ENCODE measurements at regions of chr1 and their contacts with region 1.

Region 1: GRCh38 chr1:145978854-145979759 is 14.6 kb downstream of the POLR3GL start:
- DNase-seq: no peak
- ATAC-seq: no peak
- H3K4me3 ChIP-seq: no peak overlapping the region
- H3K27ac ChIP-seq: no peak overlapping the region
- H3K4me1 ChIP-seq: 0 out of 2 replicates have a peak, but pooled peaks cover 4% of the 10 kb centered on the region
- H3K27me3 ChIP-seq: no peaks in the 10 kb centered on the region
- CTCF ChIP-seq: peak; percentile 26

Region 2: DNA sequence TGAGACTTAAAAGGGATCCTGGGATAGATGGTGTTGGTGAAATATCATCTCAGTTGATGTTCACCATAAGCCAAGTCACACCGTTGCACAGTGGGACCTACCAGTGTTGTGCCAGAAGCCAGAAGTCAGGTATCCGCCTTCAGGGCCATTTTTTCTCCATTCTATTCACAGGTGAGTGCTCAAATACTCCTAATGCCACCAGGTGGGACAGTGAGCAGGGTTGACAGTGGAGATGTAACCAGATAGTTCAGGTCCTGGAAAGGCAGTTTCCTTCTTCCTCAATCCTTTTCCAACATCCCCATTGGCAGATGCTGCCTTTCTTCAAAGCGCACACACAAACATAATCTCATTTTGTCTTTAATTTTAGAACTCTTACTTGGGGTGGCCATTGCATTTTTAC is 248.2 kb before region 1 on chr1:
- CTCF ChIA-PET with region 1: no interaction called
- POLR2A ChIA-PET with region 1: no interaction called
- in situ Hi-C with region 1: no loop called
- intact Hi-C with region 1: no loop called
- DNase-seq: no peak
- ATAC-seq: no peak
- H3K4me3 ChIP-seq: no peak overlapping the region
- H3K27ac ChIP-seq: no peak overlapping the region
- H3K4me1 ChIP-seq: no peaks in the 10 kb centered on the region
- H3K27me3 ChIP-seq: no peaks in the 10 kb centered on the region
- CTCF ChIP-seq: peak; percentile 19

Region 3: DNA sequence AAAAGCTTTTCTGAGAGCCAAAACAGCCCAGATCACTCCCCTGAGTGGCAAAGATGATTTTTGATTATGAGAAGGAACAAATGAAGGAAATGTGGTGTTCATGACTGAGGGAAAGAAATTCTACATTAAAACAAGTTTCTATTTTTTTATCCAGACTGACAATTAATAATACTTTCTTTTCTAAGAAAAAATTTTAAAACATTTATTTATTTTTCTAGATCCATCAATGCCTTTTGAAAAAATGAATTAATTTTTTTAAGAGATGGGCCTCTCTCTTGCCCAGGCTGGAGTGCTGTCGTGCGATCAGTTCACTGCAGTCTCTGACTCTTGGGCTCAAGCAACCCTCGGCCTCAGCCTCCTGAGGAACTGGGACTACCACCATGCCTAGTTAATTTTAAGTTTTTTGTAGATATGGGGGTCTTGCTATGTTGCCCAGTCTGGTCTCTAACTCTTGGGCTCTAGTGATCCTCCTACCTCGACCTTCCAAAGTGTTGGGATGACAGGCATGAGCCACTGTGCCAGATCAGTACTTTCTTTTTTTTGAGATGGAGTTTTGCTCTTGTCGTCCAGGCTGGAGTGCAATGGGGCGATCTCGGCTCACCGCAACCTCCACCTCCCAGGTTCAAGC is 28.5 kb after region 1 on chr1:
- CTCF ChIA-PET with region 1: interaction called, 12 read pairs
- POLR2A ChIA-PET with region 1: no interaction called
- in situ Hi-C with region 1: no loop called
- intact Hi-C with region 1: loop called (anchors 5 kb)
- DNase-seq: no peak
- ATAC-seq: no peak; the same call in 1 of the 2 replicates
- H3K4me3 ChIP-seq: no peak overlapping the region
- H3K27ac ChIP-seq: no peak overlapping the region
- H3K4me1 ChIP-seq: no peaks in the 10 kb centered on the region
- H3K27me3 ChIP-seq: no peaks in the 10 kb centered on the region
- CTCF ChIP-seq: peak; percentile 61; the same call in 1 of the 2 replicates

Region 4: DNA sequence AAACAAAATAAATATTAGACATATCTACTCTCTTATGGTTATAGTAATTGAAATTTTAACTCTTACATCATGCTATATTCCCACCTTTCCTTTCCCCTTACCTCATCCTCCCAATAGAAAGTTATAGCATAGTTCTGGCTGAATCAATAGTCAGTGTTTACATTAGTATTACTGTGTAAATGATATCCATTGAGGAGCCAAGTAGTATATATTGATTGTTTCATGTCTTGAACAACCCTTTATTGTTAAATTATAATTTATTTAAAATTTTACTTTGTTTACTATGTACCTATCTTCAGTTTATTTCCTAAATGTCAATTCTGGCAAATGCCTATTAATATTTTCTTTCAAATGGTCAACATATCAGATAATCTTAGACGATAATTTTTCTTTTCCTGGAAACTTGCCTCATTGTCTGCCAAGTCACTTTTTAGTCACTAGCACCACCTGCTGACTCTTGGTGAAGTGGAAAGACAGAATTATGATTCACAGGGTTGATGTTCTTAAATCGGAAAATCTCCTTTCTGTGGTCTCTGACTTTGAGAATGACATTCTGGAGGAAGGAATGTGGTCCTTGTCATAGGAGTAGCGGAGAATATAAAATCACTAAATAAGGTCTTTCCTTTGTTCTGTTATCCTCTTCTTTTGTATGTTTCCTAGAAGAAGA is 33.8 kb after region 1 on chr1:
- CTCF ChIA-PET with region 1: interaction called, 7 read pairs
- POLR2A ChIA-PET with region 1: no interaction called
- in situ Hi-C with region 1: no loop called
- intact Hi-C with region 1: loop called (anchors 5 kb)
- DNase-seq: peak; percentile 74
- ATAC-seq: peak; percentile 74; the same call in 1 of the 2 replicates
- H3K4me3 ChIP-seq: no peak overlapping the region
- H3K27ac ChIP-seq: no peak overlapping the region
- H3K4me1 ChIP-seq: no peaks in the 10 kb centered on the region
- H3K27me3 ChIP-seq: peaks cover 2% of the 10 kb centered on the region; the same call in 1 of the 2 replicates
- CTCF ChIP-seq: peak; percentile 78; the same call in 1 of the 2 replicates

Region 5: GRCh38 chr1:146036965-146037646 is 58.0 kb after region 1 on chr1:
- CTCF ChIA-PET with region 1: interaction called, 3 read pairs
- POLR2A ChIA-PET with region 1: interaction called, 16 read pairs
- in situ Hi-C with region 1: no loop called
- intact Hi-C with region 1: no loop called
- DNase-seq: peak; percentile 95
- ATAC-seq: peak; percentile 55
- H3K4me3 ChIP-seq: peak overlapping the region; percentile 66 to 99
- H3K27ac ChIP-seq: peak overlapping the region; percentile 77
- H3K4me1 ChIP-seq: peaks cover 6% of the 10 kb centered on the region; the same call in 1 of the 2 replicates
- H3K27me3 ChIP-seq: no peaks in the 10 kb centered on the region
- CTCF ChIP-seq: no peak